ENCODE measurements at regions of chr7 and their contacts with region 1.

Region 1: DNA sequence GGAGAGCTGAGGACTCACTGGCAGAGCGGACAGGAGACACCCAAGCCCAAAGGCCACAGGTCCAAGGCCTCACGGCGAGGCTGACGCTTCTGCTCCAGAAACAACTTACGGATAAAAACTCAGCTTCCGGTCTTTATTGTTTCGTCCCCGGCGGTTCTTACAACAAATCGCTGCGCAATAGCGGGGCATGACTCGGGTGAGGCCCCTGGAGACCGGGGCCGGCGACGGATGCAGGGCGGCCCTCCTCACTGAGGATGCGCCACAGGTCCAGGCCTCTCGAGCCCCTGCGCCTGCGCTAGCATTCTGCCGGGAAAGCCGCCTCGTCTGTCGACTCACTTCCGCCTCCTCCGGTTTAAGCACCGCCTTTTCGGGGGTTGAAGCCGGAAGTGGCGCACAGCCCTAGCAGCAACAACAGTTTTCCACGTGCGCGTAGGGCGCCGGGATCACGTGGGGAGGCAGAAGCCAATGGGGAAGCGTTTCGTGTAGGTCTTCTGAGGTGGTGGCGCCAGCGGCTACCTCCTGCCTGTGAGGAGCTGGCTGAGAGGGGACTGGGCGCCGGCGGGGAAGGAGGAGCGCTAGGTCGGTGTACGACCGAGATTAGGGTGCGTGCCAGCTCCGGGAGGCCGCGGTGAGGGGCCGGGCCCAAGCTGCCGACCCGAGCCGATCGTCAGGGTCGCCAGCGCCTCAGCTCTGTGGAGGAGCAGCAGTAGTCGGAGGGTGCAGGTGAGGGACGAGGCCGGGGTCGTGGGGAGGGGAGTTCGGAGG is at the starts of genes DNAJB9 and THAP5:
- DNase-seq: peak; percentile 99
- ATAC-seq: peak; percentile 99
- H3K4me3 ChIP-seq: peak within 1 kb of the TSS; percentile 72 to 92
- H3K27ac ChIP-seq: peak within 1 kb of the TSS; percentile 98
- H3K4me1 ChIP-seq: peaks cover 9% of the 10 kb centered on the region; the same call in 1 of the 2 replicates
- H3K27me3 ChIP-seq: no peaks in the 10 kb centered on the region
- CTCF ChIP-seq: no peak
- total RNA-seq, gene DNAJB9: 11.1 TPM
- total RNA-seq, gene THAP5: 24.6 TPM

Region 2: DNA sequence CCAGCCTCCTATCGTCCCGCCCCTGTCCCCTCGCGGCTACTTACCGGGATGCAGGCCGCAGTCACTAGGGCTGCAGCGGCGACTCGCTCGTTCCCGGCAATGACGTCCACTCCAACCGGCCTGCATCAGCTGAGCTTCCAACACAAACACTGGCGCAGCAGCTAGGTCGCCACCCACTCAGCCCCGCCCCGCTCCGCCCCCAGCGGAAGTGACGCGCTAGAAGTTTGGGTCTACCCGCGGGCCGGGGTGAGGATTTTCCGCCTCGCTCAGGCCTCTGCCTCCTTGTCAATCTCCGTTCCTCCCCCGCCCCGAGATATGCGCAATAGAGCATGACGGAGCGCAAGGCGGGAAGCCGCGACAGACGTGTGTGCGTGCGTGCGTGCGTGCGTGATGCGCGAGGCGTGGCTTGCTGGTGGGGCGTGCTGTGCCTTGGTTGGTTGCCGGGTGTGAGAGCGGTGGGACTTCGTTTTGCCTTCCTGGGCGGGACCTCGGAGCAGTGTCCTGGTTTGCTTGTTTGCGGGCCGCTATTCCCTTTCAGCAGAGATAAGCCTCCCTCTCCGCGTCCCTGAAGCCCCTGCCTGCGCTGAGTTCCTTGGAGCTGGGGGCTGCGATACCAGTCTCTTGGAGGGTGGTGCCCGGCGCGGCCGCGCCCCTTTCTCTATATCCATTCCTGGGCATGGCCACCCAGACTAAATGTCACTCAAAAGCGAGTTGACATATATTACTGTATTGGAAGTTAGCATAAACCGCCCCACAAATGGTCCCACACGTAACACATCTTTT is 43.4 kb before region 1 on chr7 and contains the start of gene PNPLA8:
- CTCF ChIA-PET with region 1: no interaction called
- POLR2A ChIA-PET with region 1: interaction called, 3 read pairs
- in situ Hi-C with region 1: no loop called
- intact Hi-C with region 1: loop called (anchors 5 kb)
- DNase-seq: peak; percentile 99
- ATAC-seq: peak; percentile 96
- H3K4me3 ChIP-seq: peak within 1 kb of the TSS; percentile 75 to 93
- H3K27ac ChIP-seq: peak within 1 kb of the TSS; percentile 97
- H3K4me1 ChIP-seq: peaks cover 18% of the 10 kb centered on the region
- H3K27me3 ChIP-seq: no peaks in the 10 kb centered on the region
- CTCF ChIP-seq: no peak
- total RNA-seq, gene PNPLA8: 18.1 TPM

Region 3: GRCh38 chr7:108637049-108637621 is 67.6 kb after region 1 on chr7:
- CTCF ChIA-PET with region 1: no interaction called
- POLR2A ChIA-PET with region 1: no interaction called
- in situ Hi-C with region 1: no loop called
- intact Hi-C with region 1: no loop called
- DNase-seq: no peak
- ATAC-seq: no peak
- H3K4me3 ChIP-seq: no peak overlapping the region
- H3K27ac ChIP-seq: no peak overlapping the region
- H3K4me1 ChIP-seq: no peaks in the 10 kb centered on the region
- H3K27me3 ChIP-seq: no peaks in the 10 kb centered on the region
- CTCF ChIP-seq: no peak

Measured in Panc1 (cell line).